Prostate gland (tissue), 2 donors: ENCODE measurements at regions of chr7 and their contacts with region 1.

Region 1: GRCh38 chr7:44847508-44847920 is 373 bp downstream of the H2AZ2 start:
- DNase-seq: peak; percentile 86
- H3K4me3 ChIP-seq: peak overlapping the region; percentile 62 to 87
- H3K27ac ChIP-seq: peak overlapping the region; percentile 92 to 96
- H3K4me1 ChIP-seq: no peaks in the 10 kb centered on the region
- H3K27me3 ChIP-seq: no peaks in the 10 kb centered on the region
- CTCF ChIP-seq: peak; percentile 83 to 96 (median 92)
- POLR2A ChIP-seq: no peak

Region 2: DNA sequence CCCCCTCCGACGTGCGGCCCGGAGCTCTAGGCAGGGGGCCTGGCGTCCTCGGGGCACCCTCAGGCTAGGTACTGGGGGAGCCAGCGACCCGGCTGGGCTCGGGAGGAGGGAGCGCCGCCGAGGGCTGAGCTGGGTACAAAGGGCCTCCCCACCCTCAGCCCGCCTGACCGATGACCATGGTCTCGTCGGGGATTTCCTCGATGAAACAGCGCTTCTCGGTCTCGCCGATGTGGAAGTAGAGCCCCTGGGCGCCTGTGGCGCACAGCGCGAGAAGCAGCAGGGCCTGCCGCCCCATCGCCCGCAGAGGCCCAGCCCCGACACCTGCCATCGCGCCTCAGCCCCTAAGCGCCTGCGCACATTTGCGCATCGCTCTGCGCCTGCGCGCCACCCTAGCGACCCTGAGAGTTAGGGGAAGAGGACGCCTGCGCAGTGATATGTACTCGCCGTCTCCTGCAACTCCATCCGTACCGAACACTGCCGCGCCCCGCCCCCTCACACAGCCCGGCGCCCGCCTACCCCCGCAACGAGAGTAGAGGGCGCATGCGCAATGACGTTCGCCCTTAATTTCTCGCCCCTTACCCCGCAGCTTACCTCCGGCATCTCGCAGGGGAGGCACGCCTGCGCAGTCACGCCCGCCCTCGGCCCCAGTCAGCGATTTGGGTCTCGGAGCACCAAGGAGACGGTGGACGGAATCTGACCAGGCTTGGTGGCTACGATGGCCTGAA is 265.5 kb before region 1 on chr7 and contains the start of gene TMED4:
- intact Hi-C with region 1: loop called (anchors 5 kb)
- DNase-seq: peak; percentile 100
- H3K4me3 ChIP-seq: peak within 1 kb of the TSS; percentile 73 to 77
- H3K27ac ChIP-seq: peak within 1 kb of the TSS; percentile 92 to 95
- H3K4me1 ChIP-seq: peaks cover 4% of the 10 kb centered on the region
- H3K27me3 ChIP-seq: no peaks in the 10 kb centered on the region
- CTCF ChIP-seq: peak in 2 of 4 experiments; percentile 21 to 29
- POLR2A ChIP-seq: peak; percentile 82
- total RNA-seq, gene TMED4: 227 to 243 TPM

Region 3: GRCh38 chr7:44606450-44607254 is 240.9 kb before region 1 on chr7 and contains the start of gene OGDH:
- intact Hi-C with region 1: loop called (anchors 2 kb)
- DNase-seq: peak; percentile 98
- H3K4me3 ChIP-seq: peak within 1 kb of the TSS; percentile 60 to 87
- H3K27ac ChIP-seq: peak within 1 kb of the TSS; percentile 94 to 99
- H3K4me1 ChIP-seq: no peaks in the 10 kb centered on the region
- H3K27me3 ChIP-seq: no peaks in the 10 kb centered on the region
- CTCF ChIP-seq: peak in 1 of 4 experiments; percentile 26
- POLR2A ChIP-seq: peak; percentile 96
- total RNA-seq, gene OGDH: 70.4 to 96.9 TPM

Region 4: GRCh38 chr7:44633254-44634186 is 214.0 kb before region 1 on chr7:
- intact Hi-C with region 1: no loop called
- DNase-seq: peak; percentile 76
- H3K4me3 ChIP-seq: no peak overlapping the region
- H3K27ac ChIP-seq: peak overlapping the region; percentile 68 to 69
- H3K4me1 ChIP-seq: peaks cover 16% of the 10 kb centered on the region
- H3K27me3 ChIP-seq: no peaks in the 10 kb centered on the region
- CTCF ChIP-seq: no peak
- POLR2A ChIP-seq: no peak

Region 5: DNA sequence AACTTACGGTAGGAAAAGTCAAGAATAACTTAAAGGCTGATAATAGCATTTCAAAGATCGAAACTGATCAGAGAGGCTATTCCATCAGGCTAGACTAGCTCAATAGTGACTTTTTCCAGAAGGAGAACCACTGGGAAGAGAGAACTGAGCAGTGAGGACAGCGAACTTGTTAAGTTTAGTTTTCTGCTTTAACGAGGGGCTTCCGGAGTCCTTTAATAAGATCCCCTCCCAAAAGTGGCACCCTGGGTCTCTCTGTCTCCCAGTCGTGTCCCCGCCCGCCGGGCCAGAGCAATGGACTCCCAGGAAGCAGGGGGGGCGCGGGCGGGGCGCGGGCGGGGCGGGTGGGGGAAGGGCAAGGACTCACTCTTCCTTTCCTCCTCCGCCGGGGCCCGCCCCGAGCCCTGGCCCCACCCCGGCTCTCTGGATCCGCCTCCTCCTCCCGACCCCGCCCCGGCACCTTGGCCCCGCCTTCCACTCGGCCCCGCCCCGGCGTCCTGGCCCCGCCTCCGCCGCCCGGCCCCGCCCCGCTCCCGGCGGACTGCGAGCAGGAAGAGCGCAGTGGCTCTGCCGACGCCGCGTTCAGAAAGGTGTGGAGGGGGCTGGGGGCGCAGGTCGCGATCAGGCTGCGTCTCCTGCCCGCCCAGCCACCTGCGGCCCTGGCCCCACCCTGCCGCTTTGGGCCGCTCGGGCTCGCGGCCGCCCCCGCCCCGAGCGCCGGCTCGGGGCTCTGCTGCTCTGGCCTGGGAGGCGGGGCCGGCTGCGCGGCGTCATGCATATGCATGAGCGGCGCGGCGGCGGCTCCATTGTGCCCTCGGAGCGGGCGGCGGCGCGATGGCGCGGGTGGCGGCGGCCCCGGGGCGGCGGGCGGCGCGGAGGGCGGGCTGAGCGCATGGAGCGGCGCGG is 99.2 kb before region 1 on chr7 and contains the start of gene ZMIZ2:
- intact Hi-C with region 1: loop called (anchors 5 kb)
- DNase-seq: peak; percentile 94
- H3K4me3 ChIP-seq: peak within 1 kb of the TSS; percentile 80 to 91
- H3K27ac ChIP-seq: peak within 1 kb of the TSS; percentile 94 to 96
- H3K4me1 ChIP-seq: peaks cover 3% of the 10 kb centered on the region
- H3K27me3 ChIP-seq: no peaks in the 10 kb centered on the region
- CTCF ChIP-seq: no peak
- POLR2A ChIP-seq: peak; percentile 51
- total RNA-seq, gene ZMIZ2: 27.1 to 42.8 TPM

Region 6: DNA sequence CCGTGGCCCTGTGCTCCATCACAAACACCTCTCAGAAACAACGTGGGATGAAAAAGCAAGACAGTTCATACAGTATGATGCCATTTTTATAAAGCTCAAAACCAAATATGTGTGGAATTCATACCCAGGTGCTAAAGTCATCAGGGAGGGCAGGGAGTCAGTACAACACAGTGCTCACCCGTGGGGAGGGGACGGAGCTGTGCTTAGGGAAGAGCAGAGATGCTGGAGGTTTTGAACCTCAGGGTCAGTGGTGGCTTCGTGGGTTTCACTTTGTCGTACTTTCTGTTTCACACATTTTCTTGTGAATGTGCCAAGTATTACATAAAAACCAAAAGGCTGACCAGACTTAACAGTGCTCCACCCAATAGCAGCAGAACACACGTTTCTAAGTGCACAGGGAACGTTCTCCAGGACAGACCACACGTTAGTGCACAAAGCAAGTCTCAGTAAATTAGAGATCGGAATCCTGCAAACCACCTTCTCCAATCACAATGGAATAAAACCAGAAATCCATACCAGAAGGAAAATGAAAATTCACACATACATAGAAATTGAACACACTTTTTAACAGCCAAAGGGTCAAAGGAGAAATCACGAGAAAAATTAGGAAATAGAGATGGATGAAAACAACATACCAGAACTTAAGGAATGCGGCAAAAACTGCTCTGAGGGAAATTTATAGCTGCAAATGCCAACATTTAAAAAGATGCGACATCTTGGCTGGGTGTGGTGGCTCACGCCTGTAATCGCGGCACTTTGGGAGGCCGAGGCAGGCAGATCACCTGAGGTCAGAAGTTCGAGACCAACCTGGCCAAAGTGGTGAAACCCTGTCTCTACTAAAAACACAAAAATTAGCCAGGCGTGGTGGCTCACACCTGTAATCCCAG is 77.5 kb before region 1 on chr7:
- intact Hi-C with region 1: loop called (anchors 5 kb)
- DNase-seq: no peak
- H3K4me3 ChIP-seq: no peak overlapping the region
- H3K27ac ChIP-seq: peak overlapping the region in 1 of 2 donors; percentile 59
- H3K4me1 ChIP-seq: peaks cover 27% of the 10 kb centered on the region
- H3K27me3 ChIP-seq: no peaks in the 10 kb centered on the region
- CTCF ChIP-seq: no peak
- POLR2A ChIP-seq: no peak

Region 7: DNA sequence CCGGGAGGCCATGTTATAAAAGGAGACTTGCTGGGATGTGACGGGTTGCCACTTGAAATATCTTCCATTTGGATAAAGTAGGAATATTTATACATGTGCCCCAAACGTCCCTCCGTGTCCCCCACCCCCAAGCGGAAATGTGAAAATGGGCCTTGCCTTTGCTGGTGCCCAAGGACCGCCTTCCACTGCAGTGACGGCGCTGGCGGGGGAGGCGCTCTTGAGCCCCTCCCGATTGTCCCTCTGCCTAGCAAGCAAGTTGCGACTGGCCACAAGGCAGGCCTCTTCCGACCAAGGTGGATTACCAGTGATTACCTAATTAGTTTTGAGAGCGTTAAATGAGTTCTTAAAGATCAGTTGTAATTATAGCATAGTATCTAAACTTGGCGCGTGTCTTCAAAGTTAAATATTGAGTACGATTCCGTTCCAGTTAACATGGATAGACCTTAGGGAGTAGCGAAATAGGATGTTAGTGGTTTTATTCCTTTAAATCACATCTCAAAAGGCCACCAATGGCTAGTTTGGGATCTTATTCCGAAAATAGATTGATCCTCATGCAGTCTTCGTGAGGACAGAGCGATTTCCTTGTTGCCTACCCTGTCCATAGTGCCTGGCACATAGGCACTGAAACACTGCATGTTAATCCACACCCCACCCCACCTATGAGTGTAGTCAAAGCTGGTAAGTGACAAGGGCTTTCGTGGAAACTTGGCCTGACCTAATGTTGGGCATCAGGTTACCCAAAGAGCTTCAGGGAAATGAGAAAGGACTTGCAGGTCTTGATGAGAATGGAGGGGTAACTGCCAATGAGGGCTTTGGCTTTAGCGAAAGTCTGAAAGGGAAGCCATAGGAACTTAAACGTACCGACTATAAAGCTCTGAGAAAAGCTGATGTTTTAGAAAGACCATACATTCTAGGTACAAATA is 49.9 kb before region 1 on chr7:
- intact Hi-C with region 1: loop called (anchors 2 kb)
- DNase-seq: peak; percentile 92
- H3K4me3 ChIP-seq: peak overlapping the region; percentile 91 to 94
- H3K27ac ChIP-seq: peak overlapping the region; percentile 100
- H3K4me1 ChIP-seq: peaks cover 3% of the 10 kb centered on the region
- H3K27me3 ChIP-seq: no peaks in the 10 kb centered on the region
- CTCF ChIP-seq: peak; percentile 19 to 58 (median 43)
- POLR2A ChIP-seq: peak; percentile 70

Region 8: GRCh38 chr7:44885394-44886317 is 38.1 kb after region 1 on chr7 and contains the start of gene PURB:
- intact Hi-C with region 1: loop called (anchors 5 kb)
- DNase-seq: peak; percentile 94
- H3K4me3 ChIP-seq: peak within 1 kb of the TSS; percentile 87 to 93
- H3K27ac ChIP-seq: peak within 1 kb of the TSS; percentile 93 to 94
- H3K4me1 ChIP-seq: peaks cover 21% of the 10 kb centered on the region
- H3K27me3 ChIP-seq: no peaks in the 10 kb centered on the region
- CTCF ChIP-seq: peak in 1 of 4 experiments; percentile 21
- POLR2A ChIP-seq: peak; percentile 89
- total RNA-seq, gene PURB: 21.9 to 22.0 TPM

Region 9: GRCh38 chr7:45136106-45137060 is 288.9 kb after region 1 on chr7:
- intact Hi-C with region 1: no loop called
- DNase-seq: peak; percentile 40
- H3K4me3 ChIP-seq: no peak overlapping the region
- H3K27ac ChIP-seq: no peak overlapping the region
- H3K4me1 ChIP-seq: no peaks in the 10 kb centered on the region
- H3K27me3 ChIP-seq: no peaks in the 10 kb centered on the region
- CTCF ChIP-seq: peak; percentile 46 to 86 (median 76)
- POLR2A ChIP-seq: no peak